Activated T-helper 2 cell treated with anti-CD3 and anti-CD28 coated beads, Interferon-gamma antibody, Interleukin-2, Interleukin-4, amounts not matched to agents 10 μg/mL and 5 μg/mL and 100 μg/mL, durations not matched to agents 14 hours and 24 hours and 36 hours (primary cell): ENCODE measurements at regions of chr17 and their contacts with region 1.

Region 1: DNA sequence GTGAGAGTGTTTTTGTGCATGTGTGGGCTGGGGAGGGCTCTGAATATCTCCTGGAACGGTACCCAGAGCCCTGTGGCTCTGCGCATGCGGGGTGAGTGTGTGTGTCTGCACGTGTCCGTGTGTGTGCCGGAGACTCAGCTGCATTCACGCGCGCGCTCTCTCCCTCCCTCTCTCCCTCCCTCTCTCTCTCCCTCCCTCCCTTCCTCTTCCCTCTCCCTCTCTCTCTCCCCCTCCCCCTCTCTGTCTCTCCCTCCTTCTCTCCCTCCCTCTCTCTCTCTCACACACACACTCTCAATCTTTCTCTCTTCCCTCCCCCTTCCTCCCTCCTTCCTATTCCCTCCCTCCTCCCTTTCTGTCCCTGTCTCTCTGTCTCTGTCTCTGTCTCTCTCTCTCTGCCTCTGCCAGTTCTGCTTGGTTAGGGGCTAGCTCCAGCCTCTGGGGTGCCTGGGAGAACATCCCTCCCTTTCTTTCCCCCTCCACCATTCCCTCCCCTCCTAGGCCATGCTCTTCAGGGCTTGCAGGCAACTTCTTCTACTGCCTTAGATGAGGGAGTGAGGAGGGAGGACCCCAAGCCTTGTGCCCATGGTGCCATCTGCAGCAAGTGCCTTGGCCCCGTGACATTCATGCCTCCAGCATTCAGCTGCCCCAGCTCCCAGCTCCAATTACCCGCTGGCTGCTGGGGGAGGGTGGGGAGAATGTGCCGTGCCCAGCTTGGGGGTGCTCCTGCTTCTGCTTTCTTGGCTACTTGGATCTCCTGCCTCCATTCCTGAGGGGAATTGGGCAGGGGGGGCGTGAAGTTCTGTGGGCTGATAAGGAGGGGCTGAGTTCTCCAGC is 6.4 kb downstream of the THRA start:
- DNase-seq: peak; percentile 63
- H3K4me3 Mint-ChIP-seq: peak overlapping the region; percentile 69
- H3K27ac Mint-ChIP-seq: peak overlapping the region; percentile 68
- H3K4me1 Mint-ChIP-seq: peaks cover 24% of the 10 kb centered on the region
- H3K27me3 Mint-ChIP-seq: no peaks in the 10 kb centered on the region

Region 2: DNA sequence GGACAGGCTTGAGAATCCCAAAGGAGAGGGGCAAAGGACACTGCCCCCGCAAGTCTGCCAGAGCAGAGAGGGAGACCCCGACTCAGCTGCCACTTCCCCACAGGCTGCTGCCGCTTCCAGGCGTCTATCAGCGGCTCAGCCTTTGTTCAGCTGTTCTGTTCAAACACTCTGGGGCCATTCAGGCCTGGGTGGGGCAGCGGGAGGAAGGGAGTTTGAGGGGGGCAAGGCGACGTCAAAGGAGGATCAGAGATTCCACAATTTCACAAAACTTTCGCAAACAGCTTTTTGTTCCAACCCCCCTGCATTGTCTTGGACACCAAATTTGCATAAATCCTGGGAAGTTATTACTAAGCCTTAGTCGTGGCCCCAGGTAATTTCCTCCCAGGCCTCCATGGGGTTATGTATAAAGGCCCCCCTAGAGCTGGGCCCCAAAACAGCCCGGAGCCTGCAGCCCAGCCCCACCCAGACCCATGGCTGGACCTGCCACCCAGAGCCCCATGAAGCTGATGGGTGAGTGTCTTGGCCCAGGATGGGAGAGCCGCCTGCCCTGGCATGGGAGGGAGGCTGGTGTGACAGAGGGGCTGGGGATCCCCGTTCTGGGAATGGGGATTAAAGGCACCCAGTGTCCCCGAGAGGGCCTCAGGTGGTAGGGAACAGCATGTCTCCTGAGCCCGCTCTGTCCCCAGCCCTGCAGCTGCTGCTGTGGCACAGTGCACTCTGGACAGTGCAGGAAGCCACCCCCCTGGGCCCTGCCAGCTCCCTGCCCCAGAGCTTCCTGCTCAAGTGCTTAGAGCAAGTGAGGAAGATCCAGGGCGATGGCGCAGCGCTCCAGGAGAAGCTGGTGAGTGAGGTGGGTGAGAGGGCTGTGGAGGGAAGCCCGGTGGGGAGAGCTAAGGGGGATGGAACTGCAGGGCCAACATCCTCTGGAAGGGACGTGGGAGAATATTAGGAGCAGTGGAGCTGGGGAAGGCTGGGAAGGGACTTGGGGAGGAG is 53.8 kb before region 1 on chr17 and contains the start of gene CSF3:
- intact Hi-C with region 1: no loop called
- DNase-seq: no peak
- H3K4me3 Mint-ChIP-seq: no peak within 1 kb of the TSS
- H3K27ac Mint-ChIP-seq: no peak within 1 kb of the TSS
- H3K4me1 Mint-ChIP-seq: peaks cover 5% of the 10 kb centered on the region
- H3K27me3 Mint-ChIP-seq: peaks cover 2% of the 10 kb centered on the region
- total RNA-seq, gene CSF3: not detected in 2 replicates

Region 3: DNA sequence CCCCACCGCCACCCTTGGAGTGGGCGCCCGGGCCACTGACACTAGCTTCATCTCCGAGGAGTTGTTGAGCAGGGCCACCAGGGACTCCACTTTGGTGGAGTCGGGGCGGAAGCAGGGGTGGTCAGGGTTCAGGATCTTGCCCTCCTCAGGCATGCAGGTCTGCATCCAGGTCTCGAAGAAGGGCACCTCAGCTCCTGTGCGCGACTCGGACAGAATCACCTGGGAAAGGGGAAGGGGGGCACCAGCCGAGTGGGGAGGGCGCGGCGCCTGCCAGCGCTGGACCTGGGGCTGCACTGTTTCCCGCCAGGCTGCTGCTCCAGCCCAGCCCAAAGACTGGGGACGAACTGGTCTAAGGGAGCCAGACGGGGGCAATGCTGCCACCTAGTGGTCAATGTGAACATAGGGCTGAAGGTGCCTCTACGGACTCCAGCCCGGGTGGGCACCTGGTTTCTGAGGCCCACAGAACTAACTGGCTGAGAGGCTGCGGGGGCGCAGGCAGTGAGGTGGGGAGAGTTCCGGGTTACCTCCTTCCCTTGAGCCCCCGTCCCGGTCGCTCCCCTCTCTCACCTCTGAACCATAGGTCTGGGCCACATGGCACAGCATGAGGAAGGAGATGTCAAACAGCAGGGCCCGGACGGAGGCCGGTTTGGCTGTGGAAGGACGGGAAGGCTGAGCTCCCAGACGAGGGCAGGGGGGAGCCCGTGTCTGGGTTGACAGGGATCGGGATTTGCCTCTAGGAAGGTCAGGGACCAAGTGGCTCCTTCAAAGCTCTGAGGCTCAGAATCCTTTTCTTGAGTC is 42.1 kb before region 1 on chr17:
- intact Hi-C with region 1: loop called (anchors 2 kb)
- DNase-seq: peak; percentile 61
- H3K4me3 Mint-ChIP-seq: no peak overlapping the region
- H3K27ac Mint-ChIP-seq: no peak overlapping the region
- H3K4me1 Mint-ChIP-seq: peaks cover 15% of the 10 kb centered on the region
- H3K27me3 Mint-ChIP-seq: no peaks in the 10 kb centered on the region

Region 4: GRCh38 chr17:40056379-40057010 is 12.6 kb before region 1 on chr17:
- intact Hi-C with region 1: no loop called
- DNase-seq: no peak
- H3K4me3 Mint-ChIP-seq: no peak overlapping the region
- H3K27ac Mint-ChIP-seq: no peak overlapping the region
- H3K4me1 Mint-ChIP-seq: peaks cover 13% of the 10 kb centered on the region
- H3K27me3 Mint-ChIP-seq: peaks cover 22% of the 10 kb centered on the region